SK-N-SH (cell line): ENCODE measurements at regions of chr22 and their contacts with region 1.

Region 1: DNA sequence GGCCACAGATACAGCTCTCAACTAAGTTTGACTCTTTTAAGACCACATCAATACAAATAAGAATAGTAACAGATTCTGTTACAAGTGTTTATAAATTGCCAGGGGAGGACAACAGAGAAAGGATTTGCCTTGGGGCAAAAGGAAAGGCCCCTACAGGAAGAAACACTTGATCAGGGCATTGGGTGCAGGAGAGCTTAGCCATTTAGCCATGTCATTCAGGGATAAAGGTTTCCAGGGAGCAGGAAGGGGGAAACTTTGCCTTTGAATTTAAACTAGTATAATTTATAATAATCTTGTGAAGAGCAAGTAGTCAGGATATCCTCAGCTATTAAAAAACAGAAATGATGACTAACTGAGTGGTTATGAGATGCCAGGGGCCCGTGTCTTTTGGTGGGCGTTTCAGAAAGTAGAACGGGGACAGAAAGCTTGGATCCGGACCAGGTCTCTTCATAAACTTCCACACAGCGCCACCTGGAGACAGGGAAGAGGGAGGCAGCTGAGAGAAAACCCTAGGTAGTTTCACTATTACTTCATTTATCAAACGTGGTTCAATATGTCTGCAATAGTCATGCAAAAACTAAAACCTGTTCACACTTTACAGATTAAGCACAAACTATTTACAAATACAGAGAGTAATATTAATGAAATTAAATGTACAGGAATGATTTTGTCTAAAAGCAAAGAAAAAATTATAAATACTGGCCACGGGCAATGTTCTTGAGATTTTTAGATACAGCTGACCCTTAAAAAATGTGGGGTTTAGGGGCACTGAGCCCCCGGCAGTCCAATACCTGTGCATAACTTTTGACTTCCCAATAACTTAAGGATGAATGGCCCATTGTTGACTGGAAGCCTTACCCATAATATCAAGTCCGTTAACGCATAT is 11.0 kb upstream of the SLC5A4 start:
- DNase-seq: peak; percentile 80
- H3K4me3 ChIP-seq: no peak overlapping the region
- H3K27ac ChIP-seq: no peak overlapping the region
- H3K4me1 ChIP-seq: no peaks in the 10 kb centered on the region
- H3K27me3 ChIP-seq: no peaks in the 10 kb centered on the region
- CTCF ChIP-seq: peak; percentile 92
- EP300 ChIP-seq: no peak
- RAD21 ChIP-seq: peak; percentile 79

Region 2: GRCh38 chr22:31970490-31971444 is 295.4 kb before region 1 on chr22:
- CTCF ChIA-PET with region 1: interaction called, 13 read pairs
- POLR2A ChIA-PET with region 1: no interaction called
- DNase-seq: peak; percentile 97
- H3K4me3 ChIP-seq: peak overlapping the region; percentile 53 to 70
- H3K27ac ChIP-seq: no peak overlapping the region
- H3K4me1 ChIP-seq: peaks cover 0 to 2% of the 10 kb centered on the region in 2 experiments; a peak in 1 of 4 replicates
- H3K27me3 ChIP-seq: no peaks in the 10 kb centered on the region
- CTCF ChIP-seq: peak; percentile 75
- EP300 ChIP-seq: no peak
- RAD21 ChIP-seq: peak; percentile 72

Region 3: GRCh38 chr22:32164075-32164860 is 101.9 kb before region 1 on chr22:
- CTCF ChIA-PET with region 1: interaction called, 14 read pairs
- POLR2A ChIA-PET with region 1: no interaction called
- DNase-seq: no peak
- H3K4me3 ChIP-seq: no peak overlapping the region
- H3K27ac ChIP-seq: no peak overlapping the region
- H3K4me1 ChIP-seq: no peaks in the 10 kb centered on the region
- H3K27me3 ChIP-seq: no peaks in the 10 kb centered on the region
- CTCF ChIP-seq: no peak
- EP300 ChIP-seq: no peak
- RAD21 ChIP-seq: no peak

Region 4: GRCh38 chr22:32240494-32240893 is 25.6 kb before region 1 on chr22:
- CTCF ChIA-PET with region 1: interaction called, 11 read pairs
- POLR2A ChIA-PET with region 1: no interaction called
- DNase-seq: no peak
- H3K4me3 ChIP-seq: no peak overlapping the region
- H3K27ac ChIP-seq: no peak overlapping the region
- H3K4me1 ChIP-seq: no peaks in the 10 kb centered on the region
- H3K27me3 ChIP-seq: no peaks in the 10 kb centered on the region
- CTCF ChIP-seq: no peak
- EP300 ChIP-seq: no peak
- RAD21 ChIP-seq: no peak

Region 5: GRCh38 chr22:32281072-32281471 is 14.9 kb after region 1 on chr22:
- CTCF ChIA-PET with region 1: interaction called, 30 read pairs
- POLR2A ChIA-PET with region 1: no interaction called
- DNase-seq: no peak
- H3K4me3 ChIP-seq: no peak overlapping the region
- H3K27ac ChIP-seq: no peak overlapping the region
- H3K4me1 ChIP-seq: no peaks in the 10 kb centered on the region
- H3K27me3 ChIP-seq: no peaks in the 10 kb centered on the region
- CTCF ChIP-seq: no peak
- EP300 ChIP-seq: no peak
- RAD21 ChIP-seq: no peak

Region 6: GRCh38 chr22:32325416-32325801 is 59.3 kb after region 1 on chr22:
- CTCF ChIA-PET with region 1: no interaction called
- POLR2A ChIA-PET with region 1: no interaction called
- DNase-seq: peak; percentile 78
- H3K4me3 ChIP-seq: no peak overlapping the region
- H3K27ac ChIP-seq: no peak overlapping the region; a peak in 1 of 4 replicates
- H3K4me1 ChIP-seq: peaks cover 0 to 12% of the 10 kb centered on the region in 2 experiments; a peak in 1 of 4 replicates
- H3K27me3 ChIP-seq: no peaks in the 10 kb centered on the region
- CTCF ChIP-seq: no peak
- EP300 ChIP-seq: no peak
- RAD21 ChIP-seq: no peak

Region 7: DNA sequence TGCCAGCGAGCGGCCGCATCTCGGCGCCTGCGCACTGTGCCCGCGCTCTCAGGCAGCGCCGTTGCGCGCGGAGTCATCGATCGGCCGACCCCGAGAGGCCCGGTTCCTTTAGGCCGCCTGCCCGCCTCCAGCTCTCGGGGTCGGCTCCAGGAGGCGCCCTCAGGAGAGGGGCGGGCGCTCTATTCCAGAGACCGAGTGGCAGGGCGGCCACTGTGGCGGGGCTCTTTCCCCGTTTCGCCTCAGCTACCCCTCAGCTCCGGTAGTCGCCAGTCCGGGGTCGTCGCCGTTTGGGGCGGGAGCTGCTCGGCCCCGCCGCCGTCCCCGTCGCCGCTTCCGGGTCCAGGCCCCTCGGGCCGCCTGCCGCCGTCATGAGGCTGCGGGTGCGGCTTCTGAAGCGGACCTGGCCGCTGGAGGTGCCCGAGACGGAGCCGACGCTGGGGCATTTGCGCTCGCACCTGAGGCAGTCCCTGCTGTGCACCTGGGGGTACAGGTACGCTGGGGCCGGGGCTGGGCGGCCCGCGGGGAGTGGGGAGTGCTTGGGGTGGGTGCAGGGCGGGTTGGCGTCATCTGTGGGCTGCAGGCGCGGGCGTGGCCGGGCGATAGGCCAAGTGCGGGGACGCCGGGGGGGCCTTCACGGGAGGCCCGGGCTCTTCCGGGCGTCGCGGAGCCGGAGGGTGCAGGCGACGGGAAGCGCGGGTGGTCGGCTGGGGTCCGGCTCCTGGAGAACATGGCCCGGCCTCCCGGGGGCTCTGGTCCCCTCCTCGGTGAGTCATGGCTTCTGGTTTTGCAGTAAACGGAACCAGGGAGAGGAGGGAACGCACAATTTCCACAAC is 208.7 kb after region 1 on chr22 and contains the start of gene FBXO7:
- CTCF ChIA-PET with region 1: interaction called, 10 read pairs
- POLR2A ChIA-PET with region 1: interaction called, 3 read pairs
- DNase-seq: peak; percentile 94
- H3K4me3 ChIP-seq: peak within 1 kb of the TSS; percentile 71 to 86
- H3K27ac ChIP-seq: peak within 1 kb of the TSS; percentile 93 to 95
- H3K4me1 ChIP-seq: peaks cover 12 to 23% of the 10 kb centered on the region in 2 experiments; a peak in 3 of 4 replicates
- H3K27me3 ChIP-seq: no peaks in the 10 kb centered on the region
- CTCF ChIP-seq: peak; percentile 49
- EP300 ChIP-seq: no peak
- RAD21 ChIP-seq: no peak
- polyA plus RNA-seq, gene FBXO7: 77.3 and 89.1 TPM in 2 replicates